OCI-LY7 (cell line): ENCODE measurements at regions of chr13 and their contacts with region 1.

Region 1: GRCh38 chr13:89883893-89884448 is 1463.5 kb upstream of the MIR17HG start:
- DNase-seq: no peak
- H3K4me3 ChIP-seq: no peak overlapping the region
- H3K27ac ChIP-seq: no peak overlapping the region
- H3K4me1 ChIP-seq: no peaks in the 10 kb centered on the region
- CTCF ChIP-seq: no peak

Region 2: GRCh38 chr13:90455823-90456222 is 571.9 kb after region 1 on chr13:
- CTCF ChIA-PET with region 1: interaction called, 11 read pairs
- POLR2A ChIA-PET with region 1: no interaction called
- intact Hi-C with region 1: no loop called
- DNase-seq: no peak
- H3K4me3 ChIP-seq: no peak overlapping the region
- H3K27ac ChIP-seq: no peak overlapping the region
- H3K4me1 ChIP-seq: no peaks in the 10 kb centered on the region
- CTCF ChIP-seq: no peak